ENCODE measurements at regions of chr5 and their contacts with region 1.

Region 1: GRCh38 chr5:10863763-10864383 is 102.8 kb upstream of the DAP start:
- DNase-seq: no peak
- H3K4me3 ChIP-seq: no peak overlapping the region
- CTCF ChIP-seq: peak; percentile 76

Region 2: DNA sequence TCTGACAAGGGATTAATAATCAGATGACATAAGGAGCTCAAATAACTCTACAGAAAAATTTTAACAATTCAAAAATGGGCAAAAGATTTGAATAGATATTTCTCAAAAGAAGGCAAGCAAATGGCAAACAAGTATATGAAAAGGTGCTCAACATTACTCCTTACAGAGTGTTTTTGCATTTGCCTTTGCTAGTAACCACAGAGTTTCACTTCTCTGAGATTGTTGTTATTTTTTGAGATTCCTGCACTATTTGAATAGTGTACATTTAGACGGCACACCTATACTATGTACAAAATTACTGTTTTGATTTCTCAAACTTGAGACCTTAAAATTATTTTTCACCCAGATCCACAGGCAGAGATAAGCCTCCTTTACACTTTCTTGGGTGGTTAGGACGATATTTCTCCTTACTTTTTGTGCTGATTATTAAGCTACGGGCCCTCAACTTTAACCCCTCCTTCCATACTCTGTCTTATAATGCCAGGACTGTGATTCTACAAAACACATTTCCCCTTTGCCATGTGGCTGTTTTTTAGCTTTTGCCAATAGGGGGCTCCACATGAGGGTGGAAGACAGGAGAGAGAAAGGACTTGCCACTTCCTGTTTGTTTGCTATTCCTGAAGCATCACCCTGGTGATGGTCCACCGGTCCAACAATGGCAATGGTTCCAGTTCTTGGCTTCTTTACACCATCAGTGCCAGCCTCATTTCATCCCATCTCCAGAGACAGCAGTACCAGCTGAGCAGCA is 37.8 kb before region 1 on chr5:
- CTCF ChIA-PET with region 1: interaction called, 11 read pairs
- POLR2A ChIA-PET with region 1: no interaction called
- DNase-seq: no peak
- H3K4me3 ChIP-seq: no peak overlapping the region
- CTCF ChIP-seq: no peak

Region 3: DNA sequence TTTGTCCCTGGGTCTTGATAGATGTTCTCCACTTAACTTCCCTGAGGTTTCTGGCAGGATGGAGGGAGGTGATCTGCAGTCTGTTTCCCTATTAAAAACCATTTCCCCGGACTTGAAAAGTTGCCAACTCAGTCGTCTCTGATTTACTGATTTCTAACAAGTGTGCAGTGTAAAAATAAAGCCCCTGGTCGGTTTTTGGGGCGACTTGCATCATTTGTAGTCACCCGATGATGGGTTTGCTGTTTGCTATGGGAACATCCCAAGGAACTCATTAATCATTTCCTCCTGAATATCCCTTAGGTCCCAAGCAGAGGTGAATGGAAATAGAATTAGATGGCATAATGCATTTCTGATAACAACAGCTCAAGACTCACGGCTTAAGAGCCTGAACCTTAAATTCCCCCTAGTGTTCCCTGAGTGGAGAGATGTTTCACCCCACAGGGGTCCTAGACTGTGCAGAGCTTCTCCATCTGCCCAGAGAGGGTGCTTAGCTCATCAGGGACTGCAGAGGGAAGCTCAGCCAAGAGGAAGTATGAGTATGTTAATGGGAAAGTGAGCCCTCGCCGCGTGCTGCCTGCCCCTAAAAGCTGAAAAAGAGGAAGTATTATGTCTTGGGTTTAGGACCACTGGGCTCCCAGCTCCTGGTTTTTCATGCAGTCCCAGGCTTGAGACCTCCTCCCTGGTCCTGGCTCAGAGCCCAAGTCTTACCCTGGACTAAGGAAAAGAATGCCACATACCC is 12.3 kb after region 1 on chr5:
- CTCF ChIA-PET with region 1: interaction called, 67 read pairs
- POLR2A ChIA-PET with region 1: no interaction called
- DNase-seq: no peak
- H3K4me3 ChIP-seq: no peak overlapping the region
- CTCF ChIP-seq: no peak

Region 4: DNA sequence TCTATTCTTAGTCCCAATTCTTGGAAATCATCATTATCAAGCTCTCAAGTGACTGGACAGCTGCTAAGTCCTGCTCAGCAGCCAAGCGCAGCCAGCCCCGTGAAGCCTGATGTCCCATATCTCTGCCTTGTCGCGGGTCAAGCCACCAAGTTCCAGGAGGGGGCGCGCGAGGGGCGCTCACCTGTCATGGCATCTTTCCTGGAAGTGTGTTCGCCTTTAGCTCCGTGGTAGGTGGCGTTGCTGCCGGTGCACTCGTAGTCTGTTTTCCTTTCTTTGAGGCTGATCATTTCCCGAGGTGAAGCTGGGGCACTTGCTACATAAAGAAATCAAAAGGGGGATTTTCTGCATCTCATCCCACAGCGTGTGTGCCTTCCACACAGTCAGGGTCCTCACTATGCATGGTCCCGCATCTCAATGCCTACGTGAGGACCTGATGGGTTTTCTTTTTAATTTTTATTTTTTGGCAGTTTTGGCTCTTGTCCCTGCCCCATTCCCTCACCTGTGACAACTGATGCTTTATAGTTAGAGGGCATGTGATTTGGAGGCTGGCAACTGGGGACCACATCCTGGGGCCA is 124.1 kb after region 1 on chr5:
- CTCF ChIA-PET with region 1: no interaction called
- POLR2A ChIA-PET with region 1: no interaction called
- DNase-seq: no peak
- H3K4me3 ChIP-seq: no peak overlapping the region
- CTCF ChIP-seq: peak; percentile 63

Measured in AG04449 (cell line).